Activated CD8-positive, alpha-beta T cell treated with anti-CD3 and anti-CD28 coated beads, Interleukin-2, amount 10 ng/mL, durations not matched to agents 7 days and 5 days (primary cell): ENCODE measurements at regions of chr14 and their contacts with region 1.

Region 1: GRCh38 chr14:93970549-93970946 is 5.8 kb downstream of the ASB2 start:
- DNase-seq: peak; percentile 75
- ATAC-seq: peak; percentile 76
- H3K4me3 Mint-ChIP-seq: peak overlapping the region; percentile 80
- H3K27ac Mint-ChIP-seq: peak overlapping the region; percentile 95
- H3K4me1 Mint-ChIP-seq: peaks cover 86% of the 10 kb centered on the region
- H3K27me3 Mint-ChIP-seq: no peaks in the 10 kb centered on the region

Region 2: GRCh38 chr14:93712838-93713724 is 257.5 kb before region 1 on chr14:
- CTCF ChIA-PET with region 1: no interaction called
- POLR2A ChIA-PET with region 1: no interaction called
- DNase-seq: no peak
- ATAC-seq: no peak
- H3K4me3 Mint-ChIP-seq: no peak overlapping the region
- H3K27ac Mint-ChIP-seq: no peak overlapping the region
- H3K4me1 Mint-ChIP-seq: no peaks in the 10 kb centered on the region
- H3K27me3 Mint-ChIP-seq: peaks cover 2% of the 10 kb centered on the region

Region 3: GRCh38 chr14:93953263-93953662 is 17.3 kb before region 1 on chr14:
- CTCF ChIA-PET with region 1: interaction called, 49 read pairs
- POLR2A ChIA-PET with region 1: interaction called, 303 read pairs
- DNase-seq: no peak
- ATAC-seq: no peak
- H3K4me3 Mint-ChIP-seq: peak overlapping the region; percentile 81
- H3K27ac Mint-ChIP-seq: peak overlapping the region; percentile 62
- H3K4me1 Mint-ChIP-seq: peaks cover 72% of the 10 kb centered on the region
- H3K27me3 Mint-ChIP-seq: no peaks in the 10 kb centered on the region

Region 4: GRCh38 chr14:93984987-93985410 is 14.5 kb after region 1 on chr14:
- CTCF ChIA-PET with region 1: interaction called, 22 read pairs
- POLR2A ChIA-PET with region 1: interaction called, 8 read pairs
- DNase-seq: no peak
- ATAC-seq: no peak
- H3K4me3 Mint-ChIP-seq: no peak overlapping the region
- H3K27ac Mint-ChIP-seq: no peak overlapping the region
- H3K4me1 Mint-ChIP-seq: peaks cover 13% of the 10 kb centered on the region
- H3K27me3 Mint-ChIP-seq: no peaks in the 10 kb centered on the region

Region 5: GRCh38 chr14:94001501-94002396 is 31.2 kb after region 1 on chr14:
- CTCF ChIA-PET with region 1: interaction called, 68 read pairs
- POLR2A ChIA-PET with region 1: interaction called, 3 read pairs
- DNase-seq: peak; percentile 70
- ATAC-seq: peak; percentile 83
- H3K4me3 Mint-ChIP-seq: no peak overlapping the region
- H3K27ac Mint-ChIP-seq: peak overlapping the region; percentile 50
- H3K4me1 Mint-ChIP-seq: peaks cover 40% of the 10 kb centered on the region
- H3K27me3 Mint-ChIP-seq: peaks cover 13% of the 10 kb centered on the region

Region 6: DNA sequence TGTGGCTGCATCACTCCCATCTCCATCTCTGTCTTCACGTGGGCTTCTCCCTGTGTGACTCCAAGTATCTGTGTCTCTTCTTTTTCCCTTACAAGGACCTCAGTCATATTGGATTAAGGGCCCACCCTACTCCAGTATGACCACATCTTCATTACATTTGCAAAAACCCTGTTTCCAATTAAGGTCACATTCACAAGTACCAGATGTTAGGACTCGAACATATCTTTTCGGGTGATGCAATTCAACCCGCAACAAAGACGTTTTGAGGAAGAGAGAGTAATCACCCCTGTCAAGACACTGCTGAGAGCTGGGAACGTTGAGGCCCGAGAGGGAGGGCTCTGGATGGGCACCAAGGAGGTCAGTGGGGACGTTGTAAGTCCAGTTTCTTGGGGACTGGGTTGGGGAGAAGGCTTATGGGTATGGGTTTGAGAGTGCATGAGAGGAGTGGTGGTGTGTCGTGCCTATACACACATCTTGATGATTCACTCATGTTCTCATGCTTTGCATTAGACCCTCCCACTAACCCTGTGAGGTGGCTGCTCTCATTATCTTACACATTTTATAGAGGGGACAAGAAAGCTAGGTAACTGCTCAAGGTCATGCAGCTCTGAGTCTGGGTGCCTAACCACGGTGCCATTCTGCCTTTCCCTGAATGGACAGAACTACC is 127.9 kb after region 1 on chr14:
- CTCF ChIA-PET with region 1: no interaction called
- POLR2A ChIA-PET with region 1: no interaction called
- DNase-seq: no peak
- ATAC-seq: no peak
- H3K4me3 Mint-ChIP-seq: no peak overlapping the region
- H3K27ac Mint-ChIP-seq: no peak overlapping the region
- H3K4me1 Mint-ChIP-seq: no peaks in the 10 kb centered on the region
- H3K27me3 Mint-ChIP-seq: no peaks in the 10 kb centered on the region